ENCODE measurements at regions of chr15 and their contacts with region 1.

Region 1: DNA sequence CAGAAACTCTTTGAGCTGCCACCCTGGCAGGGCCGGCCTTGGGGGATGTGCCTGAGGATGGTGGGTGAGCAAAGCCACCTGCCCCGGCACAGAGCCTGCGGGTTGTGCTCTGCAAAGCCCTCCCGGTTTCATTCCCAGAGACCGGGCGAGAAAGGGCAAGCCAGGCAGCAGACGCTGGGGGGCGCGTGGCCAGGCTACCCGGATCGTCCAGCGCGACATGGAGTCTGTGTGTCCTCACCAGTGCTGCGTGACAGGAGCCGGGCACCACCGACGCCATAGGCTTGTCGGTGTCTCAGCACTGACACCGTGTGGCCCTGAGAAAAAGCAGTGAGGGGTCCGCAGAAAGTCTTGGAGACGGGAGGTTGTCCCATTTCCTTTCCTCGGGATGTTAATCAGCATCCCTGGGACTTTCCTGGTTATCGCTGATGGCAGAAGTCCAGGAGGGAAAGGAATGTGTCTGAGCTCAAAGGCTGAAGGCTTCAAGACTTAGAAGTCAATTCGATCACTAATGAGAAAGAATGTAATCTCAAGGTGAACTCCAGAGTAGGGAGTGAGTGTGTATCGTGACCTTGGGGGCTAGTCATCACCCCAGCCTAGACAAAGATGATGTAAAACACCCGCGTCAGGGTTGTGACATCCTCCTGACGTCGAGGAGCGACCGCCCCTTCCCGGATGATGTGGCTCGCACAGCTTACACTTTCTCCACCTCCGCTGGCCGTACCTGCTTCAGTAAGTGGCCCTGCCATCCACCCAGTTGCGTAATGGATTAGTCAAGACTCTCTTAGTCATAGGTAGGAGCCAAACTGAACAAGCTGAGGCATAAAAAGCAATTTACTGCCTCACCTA is 36.3 kb upstream of the PLA2G4E start:
- DNase-seq: peak; percentile 87

Region 2: GRCh38 chr15:41894791-41895463 is 162.2 kb before region 1 on chr15:
- intact Hi-C with region 1: loop called (anchors 10 kb)
- DNase-seq: peak; percentile 87

Region 3: GRCh38 chr15:41989259-41989933 is 67.8 kb before region 1 on chr15:
- intact Hi-C with region 1: loop called (anchors 1 kb)
- DNase-seq: peak; percentile 93